H1 (cell line): ENCODE measurements at regions of chr11 and their contacts with region 1.

Region 1: DNA sequence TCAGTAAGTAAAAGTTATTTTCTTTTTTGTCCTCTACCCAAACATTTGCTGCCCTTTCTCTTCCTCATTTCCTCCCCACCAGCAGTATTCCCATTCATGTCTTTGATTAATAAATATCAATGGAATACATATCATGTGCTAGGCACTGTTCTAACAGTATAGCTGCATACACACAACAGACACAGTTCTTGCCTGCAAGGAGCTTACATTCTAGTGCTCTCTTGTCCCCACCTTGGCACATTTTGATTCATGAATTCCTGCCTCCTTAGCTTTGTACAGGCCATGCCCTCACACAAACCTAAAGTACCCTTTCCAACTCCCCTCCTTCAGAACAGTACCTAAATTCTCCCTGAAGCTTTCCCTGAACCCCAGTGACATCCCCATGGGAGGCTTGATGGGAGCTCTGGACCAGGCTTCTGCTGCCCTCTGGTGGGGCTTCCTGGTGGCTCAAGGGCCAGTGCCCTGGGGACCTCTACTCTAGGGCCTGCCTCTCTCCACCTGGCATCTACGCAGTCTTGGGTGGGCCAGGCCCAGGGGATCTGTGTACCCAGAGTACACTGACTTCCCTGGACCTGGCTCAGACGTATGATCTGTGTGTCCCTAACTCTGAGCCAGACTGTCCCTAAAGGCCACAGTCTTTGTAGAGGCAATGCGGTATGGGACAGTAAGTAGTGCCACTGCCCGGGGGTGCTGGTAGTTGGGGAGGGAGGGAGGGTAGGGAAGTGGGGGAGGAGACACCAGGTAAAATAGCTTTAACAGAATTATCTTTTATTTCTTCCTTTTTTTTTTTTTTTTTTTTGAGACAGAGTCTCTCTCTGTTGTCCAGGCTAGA is 14.1 kb downstream of the RPS13 start:
- DNase-seq: peak; percentile 46 to 93
- H3K4me3 ChIP-seq: no peak overlapping the region
- H3K27ac ChIP-seq: no peak overlapping the region
- H3K4me1 ChIP-seq: no peaks in the 10 kb centered on the region
- H3K27me3 ChIP-seq: no peaks in the 10 kb centered on the region
- CTCF ChIP-seq: peak; percentile 84 to 97 (median 92)
- EP300 ChIP-seq: no peak
- POLR2A ChIP-seq: no peak
- RAD21 ChIP-seq: peak; percentile 99 to 100

Region 2: GRCh38 chr11:16801288-16801980 is 262.0 kb before region 1 on chr11:
- CTCF ChIA-PET with region 1: interaction called, 20 read pairs
- POLR2A ChIA-PET with region 1: no interaction called
- DNase-seq: no peak
- H3K4me3 ChIP-seq: no peak overlapping the region
- H3K27ac ChIP-seq: no peak overlapping the region
- H3K4me1 ChIP-seq: no peaks in the 10 kb centered on the region
- H3K27me3 ChIP-seq: no peaks in the 10 kb centered on the region
- CTCF ChIP-seq: no peak
- EP300 ChIP-seq: no peak
- POLR2A ChIP-seq: no peak
- RAD21 ChIP-seq: no peak

Region 3: DNA sequence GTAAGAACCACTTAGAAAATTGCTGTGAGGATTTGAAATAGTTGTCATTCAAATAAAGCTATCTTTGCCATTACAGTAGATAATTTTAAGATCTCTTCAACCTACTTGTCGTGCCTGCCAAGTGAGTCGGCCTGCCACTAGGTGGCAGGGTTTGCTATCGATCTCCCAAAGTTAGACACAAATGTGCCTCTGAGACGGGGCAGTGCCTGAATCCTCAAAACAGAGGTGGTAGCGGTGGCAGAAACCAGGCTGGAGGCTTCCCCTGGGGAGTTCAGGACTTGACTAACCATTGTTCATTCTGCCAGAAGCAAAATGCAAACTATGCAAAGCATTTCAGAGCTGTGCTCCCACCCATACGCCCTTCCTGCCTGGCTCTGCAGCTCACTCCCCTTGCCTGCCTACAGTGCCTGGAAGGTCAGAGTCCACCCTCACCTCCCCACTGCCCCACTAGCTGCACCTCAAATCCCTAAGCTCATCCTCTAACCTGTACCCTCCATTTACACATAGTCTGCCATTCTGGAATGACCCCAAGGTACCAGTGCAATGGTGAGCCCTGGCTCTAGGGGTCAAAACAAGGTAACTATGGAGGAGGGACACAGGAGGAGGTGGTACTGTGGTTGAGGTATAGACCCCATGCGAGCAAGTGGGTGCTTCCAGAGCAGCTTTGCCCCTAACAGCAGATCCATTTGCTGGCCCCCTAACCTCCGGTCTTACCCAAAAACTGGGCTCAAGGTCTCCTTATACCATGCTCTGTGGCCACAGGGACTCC is 242.9 kb before region 1 on chr11:
- CTCF ChIA-PET with region 1: interaction called, 50 read pairs
- POLR2A ChIA-PET with region 1: no interaction called
- DNase-seq: peak; percentile 66 to 91
- H3K4me3 ChIP-seq: no peak overlapping the region
- H3K27ac ChIP-seq: no peak overlapping the region
- H3K4me1 ChIP-seq: peaks cover 4 to 7% (median 5%) of the 10 kb centered on the region in 4 experiments; a peak in 5 of 7 replicates
- H3K27me3 ChIP-seq: no peaks in the 10 kb centered on the region
- CTCF ChIP-seq: peak; percentile 82 to 93 (median 85)
- EP300 ChIP-seq: no peak
- POLR2A ChIP-seq: no peak
- RAD21 ChIP-seq: peak; percentile 84 to 87

Region 4: DNA sequence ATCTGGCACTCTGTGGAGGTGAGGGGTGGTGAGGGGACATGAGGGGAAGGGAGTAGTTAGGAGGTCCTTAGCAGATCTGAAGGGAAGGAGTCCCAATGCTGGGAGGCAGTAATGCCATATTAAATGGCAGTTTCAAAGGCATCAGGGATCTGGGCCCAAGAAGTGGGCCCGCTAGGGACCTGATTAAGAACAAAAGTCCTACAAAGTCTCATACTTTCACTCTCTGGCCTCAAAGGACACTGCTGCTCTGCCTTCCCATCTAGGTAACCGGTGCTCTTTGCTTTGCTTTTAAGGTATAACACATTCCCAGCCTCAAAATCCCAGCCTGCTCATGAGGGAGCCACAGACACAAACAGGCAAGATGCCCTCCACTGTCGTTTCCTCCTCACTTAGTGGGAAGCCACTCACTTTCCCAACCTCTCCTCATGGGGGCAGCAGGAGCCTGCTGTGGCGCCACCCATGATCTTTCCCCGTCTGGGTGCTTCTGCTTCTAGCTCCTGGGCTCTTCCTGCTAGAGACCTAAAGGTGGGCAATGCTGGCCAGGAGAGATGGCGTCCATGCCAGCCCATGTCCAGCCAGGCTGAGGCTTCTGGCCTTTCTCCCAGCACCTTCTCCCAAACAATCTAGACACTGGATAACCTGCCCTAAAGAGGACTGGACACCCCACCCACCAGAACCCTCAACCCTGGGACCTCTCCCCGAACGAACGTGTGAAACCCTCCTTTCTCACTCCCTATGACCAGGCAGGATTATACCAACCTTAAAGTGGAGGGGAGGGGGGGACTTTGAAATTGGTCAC is 117.5 kb before region 1 on chr11:
- CTCF ChIA-PET with region 1: interaction called, 18 read pairs
- POLR2A ChIA-PET with region 1: no interaction called
- DNase-seq: peak in 1 of 2 experiments; percentile 69
- H3K4me3 ChIP-seq: no peak overlapping the region
- H3K27ac ChIP-seq: no peak overlapping the region
- H3K4me1 ChIP-seq: peaks cover 0 to 8% (median 4%) of the 10 kb centered on the region in 4 experiments; a peak in 4 of 7 replicates
- H3K27me3 ChIP-seq: no peaks in the 10 kb centered on the region
- CTCF ChIP-seq: peak; percentile 58 to 71 (median 64)
- EP300 ChIP-seq: no peak
- POLR2A ChIP-seq: no peak
- RAD21 ChIP-seq: peak; percentile 82 to 84

Region 5: GRCh38 chr11:17046690-17047089 is 16.7 kb before region 1 on chr11:
- CTCF ChIA-PET with region 1: interaction called, 11 read pairs
- POLR2A ChIA-PET with region 1: interaction called, 3 read pairs
- DNase-seq: no peak
- H3K4me3 ChIP-seq: no peak overlapping the region
- H3K27ac ChIP-seq: no peak overlapping the region
- H3K4me1 ChIP-seq: no peaks in the 10 kb centered on the region
- H3K27me3 ChIP-seq: no peaks in the 10 kb centered on the region
- CTCF ChIP-seq: no peak
- EP300 ChIP-seq: no peak
- POLR2A ChIP-seq: no peak
- RAD21 ChIP-seq: no peak